Activated B cell treated with CpG ODN at 0.5 μM for 24 hours (primary cell): ENCODE measurements at regions of chr18 and their contacts with region 1.

Region 1: DNA sequence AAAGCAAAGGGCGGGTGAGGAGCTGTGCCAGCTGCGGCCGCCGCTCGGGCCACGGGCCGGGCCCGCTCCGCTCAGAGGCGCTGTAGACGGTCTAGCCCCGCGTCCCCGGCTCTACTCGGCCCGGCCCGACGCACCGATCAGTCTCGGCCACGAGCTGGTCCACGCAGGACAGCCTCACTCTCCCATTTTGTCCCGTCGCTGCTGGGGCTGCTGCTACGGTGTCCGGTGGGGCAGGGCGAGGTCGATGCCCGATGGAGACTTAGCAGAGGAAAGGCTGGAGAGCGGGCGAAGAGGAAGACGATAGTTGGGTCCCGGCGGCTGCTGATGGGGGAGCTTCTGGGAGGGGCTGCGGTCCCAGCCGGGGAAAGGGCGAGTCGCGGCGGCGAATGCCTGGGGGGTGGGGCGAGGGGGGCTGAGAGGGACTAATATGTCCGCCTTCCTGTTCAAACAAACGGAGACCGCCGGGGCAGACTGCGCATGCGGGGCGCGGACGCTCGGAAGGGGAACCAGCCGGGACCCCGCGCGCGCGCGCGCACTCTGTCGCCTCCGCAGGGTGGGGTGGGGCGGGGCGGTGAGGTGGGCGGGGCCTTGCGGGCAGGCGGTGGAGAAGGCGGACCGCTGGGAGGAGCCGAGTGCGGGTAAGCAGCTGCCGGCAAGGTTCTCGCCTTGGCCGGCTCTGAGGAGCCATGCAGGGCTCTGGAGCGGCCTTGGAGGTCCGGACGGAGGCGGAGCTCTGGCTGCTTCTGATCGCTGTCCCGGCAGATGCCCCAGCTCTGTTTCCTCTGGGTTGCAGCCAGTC is at the start of gene ROCK1:
- DNase-seq: peak; percentile 98
- ATAC-seq: peak; percentile 89
- H3K4me3 Mint-ChIP-seq: no peak within 1 kb of the TSS
- H3K27ac Mint-ChIP-seq: peak within 1 kb of the TSS; percentile 97
- H3K4me1 Mint-ChIP-seq: peaks cover 13% of the 10 kb centered on the region
- H3K27me3 Mint-ChIP-seq: no peaks in the 10 kb centered on the region
- CTCF ChIP-seq: no peak
- total RNA-seq, gene ROCK1: 58.9 and 68.2 TPM in 2 replicates

Region 2: DNA sequence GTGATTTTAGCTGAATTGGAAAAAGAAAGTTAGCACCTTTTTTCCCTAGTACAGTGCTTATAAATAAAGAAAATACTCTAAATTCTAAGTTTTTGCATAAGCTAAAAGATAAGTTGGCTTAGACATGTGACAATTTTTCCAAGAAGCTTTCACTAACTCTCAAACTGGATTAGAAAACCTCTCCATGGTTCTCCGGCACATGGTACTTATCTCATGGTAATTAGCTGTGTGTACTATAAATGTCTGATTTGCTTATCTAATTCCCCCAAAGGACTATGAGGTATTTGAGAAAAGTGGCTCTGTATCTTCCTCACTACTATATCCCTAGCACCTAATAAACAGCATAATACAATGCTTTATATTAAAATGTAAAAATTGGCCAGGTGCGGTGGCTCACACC is 71.1 kb before region 1 on chr18:
- CTCF ChIA-PET with region 1: no interaction called
- POLR2A ChIA-PET with region 1: no interaction called
- intact Hi-C with region 1: no loop called
- DNase-seq: no peak
- ATAC-seq: no peak
- H3K4me3 Mint-ChIP-seq: no peak overlapping the region
- H3K27ac Mint-ChIP-seq: no peak overlapping the region
- H3K4me1 Mint-ChIP-seq: no peaks in the 10 kb centered on the region
- H3K27me3 Mint-ChIP-seq: no peaks in the 10 kb centered on the region
- CTCF ChIP-seq: no peak

Region 3: DNA sequence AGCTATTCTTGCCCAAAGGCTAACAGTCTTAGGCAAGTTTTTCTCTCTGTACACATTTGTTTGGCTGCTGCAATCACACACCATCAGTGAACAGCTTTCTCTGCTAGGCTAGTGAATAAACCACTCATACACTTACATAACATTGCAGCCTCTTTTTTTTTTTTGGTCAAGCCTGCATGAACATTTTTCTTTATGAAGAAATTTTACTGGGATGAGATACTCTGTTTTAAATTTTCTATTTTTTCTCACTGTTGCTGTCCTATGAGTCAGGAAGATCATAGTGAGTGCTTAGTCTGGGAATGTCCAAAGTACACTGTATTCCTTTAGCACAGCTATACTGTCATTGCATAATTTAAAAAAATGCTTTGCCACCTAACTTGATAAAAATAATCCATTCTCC is 58.4 kb before region 1 on chr18:
- CTCF ChIA-PET with region 1: no interaction called
- POLR2A ChIA-PET with region 1: interaction called, 6 read pairs
- intact Hi-C with region 1: loop called (anchors 5 kb)
- DNase-seq: no peak
- ATAC-seq: no peak
- H3K4me3 Mint-ChIP-seq: no peak overlapping the region
- H3K27ac Mint-ChIP-seq: no peak overlapping the region
- H3K4me1 Mint-ChIP-seq: peaks cover 35% of the 10 kb centered on the region
- H3K27me3 Mint-ChIP-seq: no peaks in the 10 kb centered on the region
- CTCF ChIP-seq: no peak

Region 4: GRCh38 chr18:21093133-21093532 is 18.4 kb before region 1 on chr18:
- CTCF ChIA-PET with region 1: no interaction called
- POLR2A ChIA-PET with region 1: interaction called, 23 read pairs
- intact Hi-C with region 1: loop called (anchors 2 kb)
- DNase-seq: no peak
- ATAC-seq: no peak
- H3K4me3 Mint-ChIP-seq: no peak overlapping the region
- H3K27ac Mint-ChIP-seq: no peak overlapping the region
- H3K4me1 Mint-ChIP-seq: peaks cover 67% of the 10 kb centered on the region
- H3K27me3 Mint-ChIP-seq: no peaks in the 10 kb centered on the region
- CTCF ChIP-seq: no peak

Region 5: GRCh38 chr18:21099442-21099841 is 12.1 kb before region 1 on chr18:
- CTCF ChIA-PET with region 1: no interaction called
- POLR2A ChIA-PET with region 1: interaction called, 23 read pairs
- intact Hi-C with region 1: loop called (anchors 1 kb)
- DNase-seq: peak; percentile 27
- ATAC-seq: peak; percentile 92
- H3K4me3 Mint-ChIP-seq: peak overlapping the region; percentile 60
- H3K27ac Mint-ChIP-seq: peak overlapping the region; percentile 61
- H3K4me1 Mint-ChIP-seq: peaks cover 83% of the 10 kb centered on the region
- H3K27me3 Mint-ChIP-seq: no peaks in the 10 kb centered on the region
- CTCF ChIP-seq: no peak

Region 6: DNA sequence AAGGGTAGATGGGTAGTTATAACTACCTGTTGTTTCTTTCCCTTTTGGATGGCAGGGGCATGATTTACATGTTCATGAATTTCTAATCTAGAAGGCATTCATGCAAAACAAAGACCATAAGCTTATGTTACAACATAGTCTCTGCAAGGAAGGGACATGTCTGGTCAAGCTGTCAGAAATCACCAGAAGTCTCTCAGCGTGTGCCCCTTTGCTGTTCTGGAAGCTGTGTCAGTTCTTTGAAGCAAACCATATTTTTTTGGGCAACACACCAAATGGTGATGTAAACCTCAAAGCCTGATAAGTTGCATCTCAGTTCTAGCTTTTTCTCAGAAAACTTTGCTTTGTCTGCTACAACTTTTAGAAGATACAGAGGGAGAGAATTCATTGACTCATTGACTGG is 1479.7 kb after region 1 on chr18:
- CTCF ChIA-PET with region 1: no interaction called
- POLR2A ChIA-PET with region 1: no interaction called
- intact Hi-C with region 1: no loop called
- DNase-seq: no peak
- ATAC-seq: no peak
- H3K4me3 Mint-ChIP-seq: no peak overlapping the region
- H3K27ac Mint-ChIP-seq: no peak overlapping the region
- H3K4me1 Mint-ChIP-seq: no peaks in the 10 kb centered on the region
- H3K27me3 Mint-ChIP-seq: no peaks in the 10 kb centered on the region
- CTCF ChIP-seq: no peak